CD4-positive, alpha-beta T cell (primary cell): ENCODE measurements at regions of chr12 and their contacts with region 1.

Region 1: GRCh38 chr12:82685790-82686167 is 927 bp upstream of the TMTC2 start:
- DNase-seq: peak; percentile 83 to 94 (median 88)
- ATAC-seq: peak; percentile 62
- H3K4me3 ChIP-seq: peak overlapping the region; percentile 87
- H3K4me3 Mint-ChIP-seq: peak overlapping the region; percentile 92
- H3K27ac ChIP-seq: peak overlapping the region; percentile 87
- H3K27ac Mint-ChIP-seq: peak overlapping the region; percentile 84
- H3K4me1 ChIP-seq: peaks cover 16% of the 10 kb centered on the region
- H3K4me1 Mint-ChIP-seq: peaks cover 13% of the 10 kb centered on the region
- H3K27me3 ChIP-seq: peaks cover 0 to 6% of the 10 kb centered on the region in 2 experiments
- H3K27me3 Mint-ChIP-seq: peaks cover 12% of the 10 kb centered on the region
- CTCF ChIP-seq: peak; percentile 76

Region 2: DNA sequence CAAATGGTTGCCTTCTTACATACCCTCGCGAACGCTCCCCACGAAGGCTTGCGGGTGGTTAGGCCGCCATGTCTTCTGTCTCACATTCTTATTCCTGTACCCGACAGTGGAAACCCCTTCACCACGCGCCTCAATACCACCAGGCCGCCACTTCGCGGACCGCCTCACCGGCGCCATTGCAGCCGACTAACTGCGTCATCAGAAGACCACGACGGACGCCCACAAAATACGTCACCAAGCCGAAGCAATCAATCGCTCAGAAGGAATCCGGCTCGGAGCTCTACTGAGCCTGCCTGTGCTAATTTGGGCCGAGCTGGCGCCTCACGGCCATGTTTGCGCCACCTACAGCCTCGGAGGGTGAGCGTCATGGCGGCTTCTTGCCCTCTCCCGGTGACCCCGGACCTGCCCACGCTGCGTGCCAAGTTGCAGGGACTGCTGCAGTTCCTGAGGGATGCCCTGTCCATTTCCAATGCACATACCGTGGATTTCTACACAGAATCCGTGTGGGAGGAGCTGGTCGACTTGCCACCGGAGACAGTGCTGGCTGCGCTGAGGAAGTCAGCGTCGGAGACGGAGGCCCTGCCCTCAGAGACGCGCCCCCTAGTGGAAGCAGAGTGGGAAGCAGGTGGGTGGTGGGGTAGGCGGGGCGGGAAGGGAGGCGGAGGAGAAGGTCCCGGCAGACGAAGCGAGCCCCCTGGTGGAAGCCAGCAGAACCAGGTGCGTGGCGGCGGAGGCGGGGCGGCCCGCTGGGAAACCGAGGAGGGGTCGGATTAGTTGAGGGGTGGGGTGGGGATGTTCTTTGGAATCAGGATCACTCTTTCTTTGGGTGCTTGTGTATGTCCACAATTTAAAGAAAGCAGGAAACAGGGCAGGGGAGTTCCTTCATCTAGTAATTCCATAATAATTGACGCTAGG is 327.3 kb before region 1 on chr12 and contains the starts of genes CCDC59 and METTL25:
- CTCF ChIA-PET with region 1: interaction called, 11 read pairs
- POLR2A ChIA-PET with region 1: interaction called, 14 read pairs
- intact Hi-C with region 1: loop called (anchors 5 kb)
- DNase-seq: peak; percentile 94 to 99 (median 98)
- ATAC-seq: peak; percentile 87
- H3K4me3 ChIP-seq: peak within 1 kb of the TSS; percentile 79
- H3K4me3 Mint-ChIP-seq: peak within 1 kb of the TSS; percentile 100
- H3K27ac ChIP-seq: peak within 1 kb of the TSS; percentile 89 to 95
- H3K27ac Mint-ChIP-seq: peak within 1 kb of the TSS; percentile 99
- H3K4me1 ChIP-seq: peaks cover 10% of the 10 kb centered on the region
- H3K4me1 Mint-ChIP-seq: peaks cover 68% of the 10 kb centered on the region
- H3K27me3 ChIP-seq: no peaks in the 10 kb centered on the region
- H3K27me3 Mint-ChIP-seq: no peaks in the 10 kb centered on the region
- CTCF ChIP-seq: peak; percentile 100
- total RNA-seq, gene CCDC59: 186 to 204 TPM
- total RNA-seq, gene METTL25: 12.4 to 12.6 TPM

Region 3: GRCh38 chr12:82583756-82584155 is 102.0 kb before region 1 on chr12:
- CTCF ChIA-PET with region 1: no interaction called
- POLR2A ChIA-PET with region 1: no interaction called
- intact Hi-C with region 1: no loop called
- DNase-seq: no peak
- ATAC-seq: no peak
- H3K4me3 ChIP-seq: no peak overlapping the region
- H3K4me3 Mint-ChIP-seq: no peak overlapping the region
- H3K27ac ChIP-seq: no peak overlapping the region
- H3K27ac Mint-ChIP-seq: no peak overlapping the region
- H3K4me1 ChIP-seq: no peaks in the 10 kb centered on the region
- H3K4me1 Mint-ChIP-seq: no peaks in the 10 kb centered on the region
- H3K27me3 ChIP-seq: no peaks in the 10 kb centered on the region
- H3K27me3 Mint-ChIP-seq: no peaks in the 10 kb centered on the region
- CTCF ChIP-seq: no peak

Region 4: GRCh38 chr12:82675246-82675645 is 10.5 kb before region 1 on chr12:
- CTCF ChIA-PET with region 1: interaction called, 10 read pairs
- POLR2A ChIA-PET with region 1: no interaction called
- intact Hi-C with region 1: no loop called
- DNase-seq: no peak
- ATAC-seq: no peak
- H3K4me3 ChIP-seq: no peak overlapping the region
- H3K4me3 Mint-ChIP-seq: no peak overlapping the region
- H3K27ac ChIP-seq: no peak overlapping the region
- H3K27ac Mint-ChIP-seq: no peak overlapping the region
- H3K4me1 ChIP-seq: no peaks in the 10 kb centered on the region
- H3K4me1 Mint-ChIP-seq: no peaks in the 10 kb centered on the region
- H3K27me3 ChIP-seq: peaks cover 0 to 5% of the 10 kb centered on the region in 2 experiments
- H3K27me3 Mint-ChIP-seq: peaks cover 26% of the 10 kb centered on the region
- CTCF ChIP-seq: no peak

Region 5: DNA sequence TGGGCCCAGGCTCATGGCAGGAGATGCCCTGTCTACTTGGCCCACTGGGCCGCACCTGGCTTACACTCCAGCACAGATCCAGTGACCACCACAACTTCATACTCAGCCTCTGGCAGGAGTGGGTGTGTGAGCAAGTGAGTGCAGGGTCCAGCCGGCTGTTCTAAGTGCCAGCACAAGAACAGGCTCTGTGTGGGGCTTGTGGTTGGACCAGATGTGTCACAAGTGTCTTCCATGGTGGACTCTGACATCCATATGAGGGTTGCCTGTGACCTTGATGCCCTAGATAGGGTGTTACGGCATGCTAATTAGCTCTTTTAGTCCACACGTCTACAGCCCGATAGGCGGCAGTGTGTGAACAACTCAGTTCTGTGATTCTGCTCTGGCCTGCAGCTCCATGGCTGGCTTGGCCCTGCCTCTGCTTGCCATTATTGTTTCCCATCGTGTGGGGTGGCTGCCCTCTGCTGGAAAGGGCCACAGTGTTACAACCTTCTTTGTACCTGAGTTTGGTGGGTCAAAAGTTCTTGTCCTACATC is 1137.7 kb after region 1 on chr12:
- CTCF ChIA-PET with region 1: interaction called, 5 read pairs
- POLR2A ChIA-PET with region 1: no interaction called
- intact Hi-C with region 1: loop called in 1 of 2 experiments (anchors 10 kb)
- DNase-seq: peak in 4 of 14 experiments; percentile 3 to 16 (median 7)
- ATAC-seq: no peak
- H3K4me3 ChIP-seq: no peak overlapping the region
- H3K4me3 Mint-ChIP-seq: no peak overlapping the region
- H3K27ac ChIP-seq: no peak overlapping the region
- H3K27ac Mint-ChIP-seq: no peak overlapping the region
- H3K4me1 ChIP-seq: no peaks in the 10 kb centered on the region
- H3K4me1 Mint-ChIP-seq: no peaks in the 10 kb centered on the region
- H3K27me3 ChIP-seq: no peaks in the 10 kb centered on the region
- H3K27me3 Mint-ChIP-seq: no peaks in the 10 kb centered on the region
- CTCF ChIP-seq: no peak

Region 6: DNA sequence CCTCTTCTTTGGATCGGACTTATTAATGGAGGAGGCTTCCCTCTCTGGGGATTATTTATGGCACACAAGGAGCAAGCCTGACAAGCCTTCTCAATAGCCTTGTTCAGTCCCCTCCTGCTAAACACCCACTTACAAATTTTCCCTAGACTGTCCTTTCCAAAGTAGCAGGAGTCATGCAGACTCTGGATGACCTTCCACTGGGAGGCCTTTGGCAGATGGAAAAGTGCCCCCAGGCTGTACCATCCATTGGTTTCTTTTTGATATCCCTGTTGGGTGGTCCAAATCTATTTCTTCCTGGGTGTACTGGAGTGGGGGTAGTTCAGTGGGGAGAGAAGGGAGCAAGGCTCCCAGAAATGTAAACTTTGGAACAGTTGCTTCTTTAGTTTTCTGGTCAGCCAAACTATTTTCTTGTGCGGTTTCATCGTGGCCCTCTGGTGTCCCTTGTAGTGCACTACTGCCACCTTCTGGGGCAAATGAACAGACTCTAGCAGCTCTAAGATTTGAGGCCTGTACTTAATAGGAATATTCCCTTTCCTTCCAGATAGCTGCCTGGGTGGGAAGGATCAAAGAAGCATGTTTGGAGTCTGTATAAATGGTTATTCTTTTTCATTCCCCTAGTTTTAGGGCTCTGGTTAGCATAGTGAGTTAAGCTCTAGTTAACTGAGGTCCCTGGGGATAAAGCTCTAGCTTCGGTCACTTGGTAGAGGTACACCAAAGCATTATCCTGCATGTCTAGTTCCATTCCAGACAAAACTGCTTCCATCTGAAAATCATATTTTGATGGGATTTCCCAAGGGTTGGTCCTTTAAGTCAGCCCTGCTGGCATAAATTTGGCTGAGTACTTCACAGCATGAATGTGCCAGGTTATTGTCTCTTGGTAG is 1817.4 kb after region 1 on chr12:
- CTCF ChIA-PET with region 1: no interaction called
- POLR2A ChIA-PET with region 1: no interaction called
- intact Hi-C with region 1: loop called (anchors 5 to 10 kb)
- DNase-seq: peak in 4 of 14 experiments; percentile 3 to 33 (median 16)
- ATAC-seq: no peak
- H3K4me3 ChIP-seq: no peak overlapping the region
- H3K4me3 Mint-ChIP-seq: no peak overlapping the region
- H3K27ac ChIP-seq: no peak overlapping the region
- H3K27ac Mint-ChIP-seq: no peak overlapping the region
- H3K4me1 ChIP-seq: no peaks in the 10 kb centered on the region
- H3K4me1 Mint-ChIP-seq: no peaks in the 10 kb centered on the region
- H3K27me3 ChIP-seq: no peaks in the 10 kb centered on the region
- H3K27me3 Mint-ChIP-seq: no peaks in the 10 kb centered on the region
- CTCF ChIP-seq: no peak